CD8-positive, alpha-beta memory T cell (primary cell): ENCODE measurements at regions of chr17 and their contacts with region 1.

Region 1: GRCh38 chr17:34637548-34638525 is 58.5 kb downstream of the TMEM132E start:
- DNase-seq: peak; percentile 63 to 84 (median 71)
- H3K4me3 ChIP-seq: peak overlapping the region; percentile 69
- H3K4me3 Mint-ChIP-seq: peak overlapping the region; percentile 77 to 93 (median 86)
- H3K27ac ChIP-seq: no peak overlapping the region
- H3K27ac Mint-ChIP-seq: peak overlapping the region in 3 of 8 donors; percentile 35 to 68 (median 45)
- H3K4me1 ChIP-seq: peaks cover 9% of the 10 kb centered on the region
- H3K4me1 Mint-ChIP-seq: peaks cover 0 to 16% (median 4%) of the 10 kb centered on the region in 3 donors
- H3K27me3 ChIP-seq: no peaks in the 10 kb centered on the region
- H3K27me3 Mint-ChIP-seq: peaks cover 11 to 44% of the 10 kb centered on the region in 2 donors

Region 2: DNA sequence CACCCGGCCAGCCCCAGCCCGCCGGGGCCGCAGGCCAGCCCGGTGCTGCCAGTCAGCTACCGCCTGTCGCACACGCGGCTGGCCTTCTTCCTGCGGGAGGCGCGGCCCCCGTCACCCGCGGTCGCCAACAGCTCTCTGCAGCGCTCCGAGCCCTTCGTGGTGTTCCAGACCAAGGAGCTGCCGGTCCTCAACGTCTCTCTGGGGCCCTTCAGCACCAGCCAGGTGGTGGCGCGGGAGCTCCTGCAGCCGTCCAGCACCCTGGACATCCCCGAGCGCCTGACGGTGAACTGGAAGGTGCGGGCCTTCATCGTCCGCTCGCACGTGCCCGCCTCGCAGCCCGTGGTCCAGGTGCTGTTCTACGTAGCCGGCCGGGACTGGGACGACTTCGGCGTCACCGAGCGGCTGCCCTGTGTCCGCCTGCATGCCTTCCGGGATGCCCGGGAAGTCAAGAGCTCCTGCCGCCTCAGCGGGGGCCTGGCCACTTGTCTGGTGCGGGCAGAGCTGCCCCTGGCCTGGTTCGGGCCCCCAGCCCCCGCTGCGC is 11.6 kb before region 1 on chr17:
- CTCF ChIA-PET with region 1: interaction called, 21 read pairs
- POLR2A ChIA-PET with region 1: no interaction called
- DNase-seq: peak in 1 of 5 donors; percentile 5
- H3K4me3 ChIP-seq: no peak overlapping the region
- H3K4me3 Mint-ChIP-seq: no peak overlapping the region
- H3K27ac ChIP-seq: no peak overlapping the region
- H3K27ac Mint-ChIP-seq: no peak overlapping the region
- H3K4me1 ChIP-seq: no peaks in the 10 kb centered on the region
- H3K4me1 Mint-ChIP-seq: peaks cover 0 to 6% (median 0%) of the 10 kb centered on the region in 3 donors
- H3K27me3 ChIP-seq: peaks cover 24% of the 10 kb centered on the region
- H3K27me3 Mint-ChIP-seq: peaks cover 35 to 74% of the 10 kb centered on the region in 2 donors

Region 3: GRCh38 chr17:35103271-35103670 is 465.4 kb after region 1 on chr17:
- CTCF ChIA-PET with region 1: no interaction called
- POLR2A ChIA-PET with region 1: interaction called, 20 read pairs
- DNase-seq: no peak
- H3K4me3 ChIP-seq: no peak overlapping the region
- H3K4me3 Mint-ChIP-seq: no peak overlapping the region
- H3K27ac ChIP-seq: no peak overlapping the region
- H3K27ac Mint-ChIP-seq: peak overlapping the region in 1 of 8 donors; percentile 38
- H3K4me1 ChIP-seq: no peaks in the 10 kb centered on the region
- H3K4me1 Mint-ChIP-seq: peaks cover 2 to 4% (median 4%) of the 10 kb centered on the region in 3 donors
- H3K27me3 ChIP-seq: no peaks in the 10 kb centered on the region
- H3K27me3 Mint-ChIP-seq: no peaks in the 10 kb centered on the region